Activated CD4-positive, alpha-beta T cell treated with anti-CD3 and anti-CD28 coated beads for 36 hours (primary cell): ENCODE measurements at regions of chr10 and their contacts with region 1.

Region 1: GRCh38 chr10:6929148-6929830 is 349.2 kb upstream of the PRKCQ start:
- DNase-seq: no peak
- ATAC-seq: no peak
- H3K4me3 Mint-ChIP-seq: no peak overlapping the region
- H3K27ac Mint-ChIP-seq: peak overlapping the region; percentile 24
- H3K4me1 Mint-ChIP-seq: peaks cover 36% of the 10 kb centered on the region
- H3K27me3 Mint-ChIP-seq: no peaks in the 10 kb centered on the region

Region 2: DNA sequence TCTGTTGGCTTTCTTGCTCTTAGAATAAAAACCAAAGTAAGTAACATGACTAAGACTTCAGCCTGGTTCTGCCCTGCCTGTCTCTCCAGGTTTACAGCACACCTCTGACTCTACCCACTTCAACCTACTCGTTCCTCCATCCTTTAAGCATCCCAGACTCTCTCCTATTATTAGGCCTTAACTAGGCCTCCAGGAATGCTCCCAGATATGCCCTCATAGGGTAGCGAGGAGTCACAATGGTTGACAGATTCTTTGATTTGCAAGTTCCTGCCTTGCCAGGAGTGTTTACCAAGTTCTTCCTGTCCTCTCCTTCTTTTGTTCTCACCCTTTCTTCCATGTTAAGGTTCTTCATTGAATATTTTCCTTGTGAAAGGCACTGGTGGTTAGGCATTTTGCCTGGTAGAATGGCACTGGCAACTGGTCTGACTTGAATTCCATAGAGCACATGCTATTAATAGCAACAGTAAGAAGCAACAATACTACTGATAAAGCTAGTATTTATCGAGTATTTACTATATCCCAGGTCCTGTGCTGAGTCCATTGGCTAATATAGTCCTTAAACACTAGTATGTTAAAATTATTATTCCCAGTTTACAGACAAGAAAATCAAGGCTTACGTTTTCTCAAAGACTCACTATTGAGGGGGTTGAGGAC is 21.3 kb before region 1 on chr10:
- CTCF ChIA-PET with region 1: no interaction called
- POLR2A ChIA-PET with region 1: no interaction called
- intact Hi-C with region 1: no loop called
- DNase-seq: no peak
- ATAC-seq: no peak
- H3K4me3 Mint-ChIP-seq: no peak overlapping the region
- H3K27ac Mint-ChIP-seq: no peak overlapping the region
- H3K4me1 Mint-ChIP-seq: no peaks in the 10 kb centered on the region
- H3K27me3 Mint-ChIP-seq: peaks cover 2% of the 10 kb centered on the region

Region 3: DNA sequence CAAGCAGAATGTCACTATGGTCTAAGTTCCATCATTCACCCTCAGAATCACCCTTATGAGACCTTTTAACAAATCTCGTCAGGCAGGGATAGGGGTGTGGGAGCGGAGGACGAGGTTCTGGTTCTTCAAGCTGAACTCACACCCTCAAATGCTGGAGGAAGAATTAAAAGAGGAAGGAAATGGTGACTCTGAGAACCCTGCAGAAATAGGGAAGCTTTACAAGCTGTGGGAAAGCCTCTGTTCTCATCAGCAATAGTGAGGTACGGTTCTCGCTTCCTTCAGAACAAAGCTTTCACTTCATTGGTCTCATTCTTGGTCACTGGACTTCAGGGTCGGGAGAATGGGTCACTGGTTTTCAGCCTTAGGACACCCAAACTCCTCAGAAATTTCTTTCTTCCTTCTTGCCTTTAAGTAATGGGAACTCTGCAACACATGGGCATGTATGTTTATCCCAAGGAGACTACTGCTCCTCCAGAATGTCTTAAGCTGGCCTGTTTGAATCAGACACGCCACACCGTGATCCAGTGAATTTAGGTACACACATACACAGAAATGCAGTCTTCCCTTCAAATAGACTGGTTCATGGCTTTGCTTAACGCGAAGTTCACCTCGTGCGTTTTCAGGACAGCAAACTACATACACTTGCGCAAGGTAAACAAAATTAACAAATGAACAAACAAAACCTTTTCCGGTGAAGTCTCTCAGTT is 255.5 kb after region 1 on chr10:
- CTCF ChIA-PET with region 1: no interaction called
- POLR2A ChIA-PET with region 1: no interaction called
- intact Hi-C with region 1: loop called in 1 of 2 experiments (anchors 5 kb)
- DNase-seq: no peak
- ATAC-seq: peak; percentile 6
- H3K4me3 Mint-ChIP-seq: peak overlapping the region; percentile 2
- H3K27ac Mint-ChIP-seq: peak overlapping the region; percentile 89
- H3K4me1 Mint-ChIP-seq: peaks cover 69% of the 10 kb centered on the region
- H3K27me3 Mint-ChIP-seq: no peaks in the 10 kb centered on the region